Mammary epithelial cell (primary cell): ENCODE measurements at regions of chr2 and their contacts with region 1.

Region 1: GRCh38 chr2:11863513-11864328 is 117.3 kb downstream of the LPIN1 start:
- DNase-seq: peak; percentile 77
- H3K4me3 ChIP-seq: no peak overlapping the region
- H3K27ac ChIP-seq: no peak overlapping the region
- H3K4me1 ChIP-seq: peaks cover 15% of the 10 kb centered on the region
- H3K27me3 ChIP-seq: no peaks in the 10 kb centered on the region
- CTCF ChIP-seq: peak; percentile 88 to 98

Region 2: GRCh38 chr2:11955314-11955713 is 91.6 kb after region 1 on chr2:
- CTCF ChIA-PET with region 1: no interaction called
- dilution Hi-C with region 1: no loop called
- in situ Hi-C with region 1: no loop called
- intact Hi-C with region 1: loop called (anchors 2 kb)
- DNase-seq: peak; percentile 58
- H3K4me3 ChIP-seq: no peak overlapping the region
- H3K27ac ChIP-seq: no peak overlapping the region
- H3K4me1 ChIP-seq: peaks cover 8% of the 10 kb centered on the region
- H3K27me3 ChIP-seq: no peaks in the 10 kb centered on the region
- CTCF ChIP-seq: no peak

Region 3: DNA sequence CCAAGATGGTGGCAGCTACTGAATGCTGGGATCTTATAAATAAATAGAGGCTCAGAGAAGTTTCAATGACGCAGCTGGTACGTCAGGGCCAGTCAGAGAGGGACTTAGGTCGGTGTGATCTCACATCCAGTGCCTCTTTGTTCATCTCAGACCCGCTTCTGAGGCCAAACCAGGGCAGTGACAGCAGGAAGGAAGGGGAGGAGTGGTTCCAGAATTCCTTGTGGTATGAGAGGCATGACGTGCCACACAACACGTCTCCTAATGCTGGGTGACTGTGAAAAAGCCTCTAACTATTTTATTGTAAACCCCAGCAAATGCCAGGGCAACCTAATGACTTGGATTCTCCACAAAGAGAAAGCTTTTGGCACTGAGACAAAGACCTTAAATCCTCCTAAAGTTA is 306.0 kb after region 1 on chr2:
- CTCF ChIA-PET with region 1: interaction called, 12 read pairs
- dilution Hi-C with region 1: no loop called
- in situ Hi-C with region 1: no loop called
- intact Hi-C with region 1: loop called (anchors 1 kb)
- DNase-seq: peak; percentile 12
- H3K4me3 ChIP-seq: no peak overlapping the region
- H3K27ac ChIP-seq: no peak overlapping the region
- H3K4me1 ChIP-seq: peaks cover 6% of the 10 kb centered on the region
- H3K27me3 ChIP-seq: no peaks in the 10 kb centered on the region
- CTCF ChIP-seq: no peak

Region 4: DNA sequence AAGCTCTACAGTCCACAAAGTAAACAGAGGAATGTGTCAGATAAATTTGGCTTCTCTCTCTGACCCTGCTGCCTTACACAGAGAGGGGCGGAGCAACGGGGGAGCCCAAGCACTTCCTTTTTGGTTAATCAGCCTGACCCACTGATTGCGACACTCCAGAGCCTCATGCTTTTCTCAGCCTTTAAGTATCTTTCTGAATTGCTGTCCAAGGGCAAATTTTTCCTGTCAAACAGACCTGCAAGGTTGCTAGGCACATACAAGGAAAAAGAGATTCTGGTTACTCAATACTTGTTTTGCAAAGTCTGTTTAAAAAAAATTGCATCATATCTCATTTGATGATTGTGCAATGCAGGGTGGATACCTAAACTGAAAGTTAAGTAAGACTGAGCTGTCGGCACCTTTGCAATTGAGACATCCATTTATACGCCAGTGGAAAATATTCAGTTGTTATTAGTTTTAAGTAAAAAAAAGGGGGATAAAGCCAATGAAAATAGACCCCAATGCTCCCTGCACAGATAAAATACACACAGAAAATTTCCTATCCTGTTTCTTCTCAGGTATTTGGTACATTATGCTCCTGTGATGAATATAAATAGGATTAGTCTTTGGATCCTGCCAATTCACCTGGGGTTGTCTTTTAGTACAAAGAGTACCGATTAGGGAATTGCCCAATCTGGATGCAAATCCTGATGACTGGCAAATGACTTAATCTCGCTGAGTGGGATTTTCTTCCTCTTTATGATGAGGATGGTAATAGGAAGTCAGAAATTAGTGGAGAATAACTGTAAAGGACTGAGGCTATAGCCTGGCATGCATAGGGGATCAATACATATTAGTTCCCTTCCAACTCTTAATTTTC is 592.8 kb after region 1 on chr2:
- CTCF ChIA-PET with region 1: no interaction called
- dilution Hi-C with region 1: no loop called
- in situ Hi-C with region 1: no loop called
- intact Hi-C with region 1: loop called (anchors 10 kb)
- DNase-seq: peak; percentile 96
- H3K4me3 ChIP-seq: peak overlapping the region in 2 of 3 experiments; percentile 28 to 35
- H3K27ac ChIP-seq: peak overlapping the region; percentile 67
- H3K4me1 ChIP-seq: peaks cover 8% of the 10 kb centered on the region
- H3K27me3 ChIP-seq: no peaks in the 10 kb centered on the region
- CTCF ChIP-seq: no peak

Region 5: DNA sequence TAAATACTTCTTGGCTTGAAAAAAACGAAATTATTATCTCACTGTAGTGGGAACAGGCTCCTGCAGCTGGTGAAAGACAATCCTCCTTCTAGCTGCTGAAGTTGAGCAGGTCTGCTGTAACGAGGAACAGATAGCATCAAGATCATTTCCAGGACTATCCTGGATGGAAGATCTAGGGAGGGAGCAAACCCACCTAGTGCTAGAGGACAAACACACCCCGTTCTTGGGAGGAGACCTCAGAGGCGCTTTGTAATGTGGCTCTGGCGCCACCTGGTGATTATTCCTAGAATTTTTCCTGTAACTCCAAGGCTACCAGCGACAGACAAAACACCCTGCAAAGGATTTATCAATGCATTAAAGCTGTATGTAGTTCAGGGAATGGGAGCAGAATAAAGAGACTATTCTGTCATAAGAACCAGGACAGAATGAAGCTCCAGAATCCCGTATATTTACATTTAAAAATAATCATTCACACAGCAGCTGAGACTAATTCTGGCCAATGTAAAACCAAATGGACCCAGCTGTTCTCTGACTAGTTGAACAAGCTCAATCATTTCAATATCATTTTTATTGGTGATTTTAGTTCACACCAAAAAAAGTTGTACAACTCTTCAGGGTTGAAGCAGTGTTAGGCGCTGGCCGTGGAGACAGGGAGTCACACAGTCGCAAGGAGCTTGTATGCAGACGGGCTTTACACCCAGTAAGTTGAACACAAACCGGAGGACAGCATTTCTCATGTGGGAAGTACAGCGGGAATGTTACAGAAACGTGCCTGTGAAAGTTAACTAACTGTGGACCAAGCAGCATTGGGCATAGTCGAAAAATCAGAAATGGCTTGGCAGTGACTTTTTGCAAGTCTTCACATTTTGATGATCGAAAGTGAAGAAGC is 1143.4 kb after region 1 on chr2:
- CTCF ChIA-PET with region 1: no interaction called
- dilution Hi-C with region 1: loop called (anchors 25 kb)
- in situ Hi-C with region 1: no loop called
- intact Hi-C with region 1: loop called (anchors 1 kb)
- DNase-seq: peak; percentile 40
- H3K4me3 ChIP-seq: peak overlapping the region; percentile 14 to 31 (median 28)
- H3K27ac ChIP-seq: no peak overlapping the region
- H3K4me1 ChIP-seq: peaks cover 30% of the 10 kb centered on the region
- H3K27me3 ChIP-seq: no peaks in the 10 kb centered on the region
- CTCF ChIP-seq: peak; percentile 63 to 81